Naive thymus-derived CD4-positive, alpha-beta T cell (primary cell): ENCODE measurements at regions of chr7 and their contacts with region 1.

Region 1: GRCh38 chr7:12715372-12716133 is 28.1 kb downstream of the ARL4A start:
- DNase-seq: peak in 1 of 9 donors; percentile 34
- ATAC-seq: peak; percentile 70
- H3K4me3 ChIP-seq: no peak overlapping the region
- H3K4me3 Mint-ChIP-seq: peak overlapping the region in 4 of 10 donors; percentile 7 to 63 (median 44)
- H3K27ac ChIP-seq: no peak overlapping the region
- H3K27ac Mint-ChIP-seq: peak overlapping the region in 2 of 9 donors; percentile 7 to 76
- H3K4me1 ChIP-seq: peaks cover 0 to 8% of the 10 kb centered on the region in 2 donors
- H3K4me1 Mint-ChIP-seq: peaks cover 0 to 43% (median 20%) of the 10 kb centered on the region in 7 donors
- H3K27me3 ChIP-seq: no peaks in the 10 kb centered on the region
- H3K27me3 Mint-ChIP-seq: no peaks in the 10 kb centered on the region

Region 2: GRCh38 chr7:12731214-12731656 is 15.7 kb after region 1 on chr7:
- CTCF ChIA-PET with region 1: no interaction called
- POLR2A ChIA-PET with region 1: no interaction called
- intact Hi-C with region 1: loop called in 1 of 2 experiments (anchors 2 kb)
- DNase-seq: peak in 2 of 9 donors; percentile 6 to 19
- ATAC-seq: peak; percentile 40
- H3K4me3 ChIP-seq: no peak overlapping the region
- H3K4me3 Mint-ChIP-seq: peak overlapping the region in 9 of 10 donors; percentile 40 to 86 (median 72)
- H3K27ac ChIP-seq: peak overlapping the region; percentile 6
- H3K27ac Mint-ChIP-seq: peak overlapping the region; percentile 26 to 95 (median 78)
- H3K4me1 ChIP-seq: peaks cover 13 to 17% of the 10 kb centered on the region in 2 donors
- H3K4me1 Mint-ChIP-seq: peaks cover 10 to 33% (median 26%) of the 10 kb centered on the region in 7 donors
- H3K27me3 ChIP-seq: no peaks in the 10 kb centered on the region
- H3K27me3 Mint-ChIP-seq: peaks cover 0 to 4% (median 0%) of the 10 kb centered on the region in 5 donors